ENCODE measurements at regions of chr14 and their contacts with region 1.

Region 1: DNA sequence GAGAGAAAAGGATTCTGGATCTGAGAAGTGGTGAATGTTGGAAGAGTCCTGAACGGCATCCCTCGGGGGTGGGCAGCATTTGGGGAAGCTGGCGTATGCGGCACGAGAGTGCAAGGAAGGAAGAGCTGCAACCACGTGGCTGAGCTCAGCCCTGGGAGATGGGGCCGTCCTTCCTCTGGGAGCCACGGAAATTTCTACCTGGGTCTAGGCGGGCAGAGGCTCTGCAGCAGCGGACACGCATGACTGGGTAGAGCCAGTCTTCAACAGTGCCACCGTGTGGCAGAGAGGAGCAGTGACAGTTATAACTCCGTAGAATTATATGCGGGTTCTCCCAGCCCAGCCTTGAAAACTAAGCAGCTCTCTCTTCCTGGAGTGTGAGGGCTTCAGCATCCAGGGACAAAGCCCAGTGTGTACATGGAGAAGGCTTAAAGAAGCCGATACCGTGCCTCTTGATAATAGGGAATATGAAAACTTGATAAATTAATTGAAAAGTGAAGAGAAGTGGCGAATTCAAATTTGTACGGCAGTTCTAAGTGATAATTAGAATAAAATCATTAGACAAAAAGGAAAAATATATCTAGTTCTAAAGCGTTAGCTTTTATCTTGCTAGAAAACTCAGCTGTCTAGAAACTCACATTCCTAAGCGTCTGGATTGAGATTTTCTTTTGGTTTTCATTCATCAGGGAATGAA is 82.9 kb upstream of the STXBP6 start:
- DNase-seq: peak; percentile 72
- CTCF ChIP-seq: peak; percentile 66

Region 2: DNA sequence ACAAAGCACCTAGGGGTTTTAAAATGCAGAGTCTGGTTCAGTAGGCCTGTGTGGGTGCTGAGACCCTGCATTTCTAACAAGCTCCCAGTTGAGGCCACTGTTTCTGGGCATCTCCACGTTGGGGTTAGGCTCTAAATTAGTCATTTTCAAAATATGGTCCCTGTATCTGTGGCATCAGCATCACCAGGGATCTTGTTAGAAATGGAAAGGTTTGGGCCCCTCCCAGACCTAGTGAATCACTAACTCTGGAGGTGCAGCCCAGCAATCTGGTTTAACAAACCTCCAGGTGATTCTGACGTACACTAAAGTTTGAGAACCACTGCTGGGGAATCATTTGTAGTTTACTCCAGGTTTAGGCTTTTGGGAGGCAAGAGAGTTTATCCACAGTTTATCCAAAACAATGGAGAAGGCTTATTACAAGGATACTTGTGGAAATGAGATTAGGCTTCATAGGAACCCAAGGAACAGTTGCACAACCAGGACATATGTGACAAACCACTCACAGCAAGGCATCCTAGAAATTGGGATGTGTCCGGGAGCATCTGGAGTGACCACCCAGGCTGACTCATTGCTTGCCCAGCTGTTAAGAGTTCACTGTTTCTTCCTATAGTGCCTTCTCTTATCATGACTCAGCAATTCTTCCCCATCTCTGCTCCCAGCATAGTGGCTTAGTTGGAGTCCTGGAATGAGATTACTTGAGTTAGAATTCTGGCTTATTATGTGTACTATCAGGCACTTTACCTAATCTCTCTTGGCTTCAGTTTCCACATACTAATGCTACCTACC is 11.3 kb before region 1 on chr14:
- CTCF ChIA-PET with region 1: interaction called, 21 read pairs
- POLR2A ChIA-PET with region 1: no interaction called
- DNase-seq: no peak
- CTCF ChIP-seq: no peak

Region 3: GRCh38 chr14:25150934-25151790 is 18.3 kb after region 1 on chr14:
- CTCF ChIA-PET with region 1: interaction called, 10 read pairs
- POLR2A ChIA-PET with region 1: no interaction called
- DNase-seq: peak; percentile 52
- CTCF ChIP-seq: peak; percentile 75

Region 4: DNA sequence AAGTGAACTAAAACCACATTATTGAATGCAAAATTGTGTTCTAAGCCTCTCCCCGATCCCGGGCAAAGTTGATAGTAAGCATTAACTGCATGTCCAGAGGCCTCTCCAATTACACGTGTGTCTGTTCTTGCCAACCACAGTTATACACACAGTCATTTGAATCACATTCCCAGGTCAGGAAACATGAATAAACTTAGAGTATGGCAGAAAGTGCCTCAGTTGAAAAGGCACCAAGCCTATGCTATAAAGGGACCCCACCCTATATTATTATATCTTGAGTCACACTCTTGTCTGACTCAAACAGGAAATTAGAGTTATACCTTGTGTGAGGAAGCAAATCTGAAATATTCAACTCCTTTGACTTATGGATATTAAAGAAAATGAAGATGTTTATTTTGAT is 45.4 kb after region 1 on chr14:
- CTCF ChIA-PET with region 1: no interaction called
- POLR2A ChIA-PET with region 1: no interaction called
- DNase-seq: no peak
- CTCF ChIP-seq: no peak